HepG2 (cell line): ENCODE measurements at regions of chr16 and their contacts with region 1.

Region 1: DNA sequence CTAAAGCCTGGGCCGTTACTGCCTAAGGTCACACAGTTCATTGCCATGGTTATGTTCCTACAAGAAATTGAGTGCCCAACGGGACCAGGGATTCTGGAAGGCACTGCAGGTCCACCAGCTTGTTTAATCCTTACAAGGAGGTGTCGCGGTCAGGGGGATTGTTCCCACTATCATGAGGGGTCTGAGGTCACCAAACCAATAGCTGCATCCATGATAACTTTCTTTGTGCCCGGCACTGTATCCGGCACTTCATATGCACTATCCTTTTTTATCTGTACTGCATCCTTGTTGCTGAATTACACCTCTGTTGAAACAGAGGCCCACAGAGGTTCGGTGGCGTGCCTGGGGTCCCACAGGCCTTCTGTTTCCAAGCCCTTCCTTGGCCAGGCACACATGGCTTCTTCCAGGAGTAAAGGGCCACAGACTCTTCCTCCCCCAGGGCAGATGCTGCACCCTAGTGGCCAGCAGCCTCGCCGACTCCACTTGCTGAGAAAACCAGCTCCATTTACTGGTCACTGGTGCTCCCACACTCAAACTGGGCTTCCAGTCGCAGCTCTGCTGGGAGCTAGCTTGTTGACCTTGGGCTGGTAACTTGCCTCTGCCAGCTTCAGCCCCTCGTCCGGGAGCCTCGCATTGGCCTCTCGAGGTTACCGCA is 82.0 kb upstream of the PLCG2 start:
- DNase-seq: peak; percentile 45
- ATAC-seq: peak; percentile 68
- H3K4me3 ChIP-seq: no peak overlapping the region
- H3K27ac ChIP-seq: no peak overlapping the region
- H3K4me1 ChIP-seq: no peaks in the 10 kb centered on the region
- H3K27me3 ChIP-seq: no peaks in the 10 kb centered on the region
- CTCF ChIP-seq: peak; percentile 90
- EP300 ChIP-seq: no peak
- POLR2A ChIP-seq: no peak
- RAD21 ChIP-seq: peak; percentile 72

Region 2: DNA sequence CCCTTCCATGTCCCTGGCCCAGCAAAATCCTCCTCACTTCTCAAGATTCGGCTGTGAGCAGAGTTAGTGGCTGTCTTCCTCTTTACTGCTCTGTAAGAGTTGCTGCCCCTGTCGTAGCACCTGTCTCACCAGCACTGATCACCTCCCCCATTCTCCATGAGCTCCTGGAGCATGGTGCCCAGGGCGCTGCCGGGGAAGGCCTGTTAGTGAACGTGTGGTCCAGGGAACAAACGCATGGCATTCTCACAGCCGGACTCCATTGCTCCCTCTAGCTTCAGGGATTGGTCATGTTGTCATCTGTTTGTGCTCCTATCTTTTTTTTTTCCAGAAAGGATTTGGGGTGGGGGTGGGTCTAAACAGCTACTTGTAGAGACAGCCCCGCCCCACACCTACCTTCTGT is 111.3 kb before region 1 on chr16:
- CTCF ChIA-PET with region 1: no interaction called
- POLR2A ChIA-PET with region 1: no interaction called
- in situ Hi-C with region 1: no loop called
- intact Hi-C with region 1: no loop called
- DNase-seq: peak; percentile 50
- ATAC-seq: no peak; the same call in 2 of the 3 replicates
- H3K4me3 ChIP-seq: no peak overlapping the region
- H3K27ac ChIP-seq: no peak overlapping the region
- H3K4me1 ChIP-seq: peaks cover 56% of the 10 kb centered on the region
- H3K27me3 ChIP-seq: no peaks in the 10 kb centered on the region
- CTCF ChIP-seq: peak; percentile 48
- EP300 ChIP-seq: no peak
- POLR2A ChIP-seq: no peak
- RAD21 ChIP-seq: peak; percentile 40; the same call in 1 of the 2 replicates

Region 3: DNA sequence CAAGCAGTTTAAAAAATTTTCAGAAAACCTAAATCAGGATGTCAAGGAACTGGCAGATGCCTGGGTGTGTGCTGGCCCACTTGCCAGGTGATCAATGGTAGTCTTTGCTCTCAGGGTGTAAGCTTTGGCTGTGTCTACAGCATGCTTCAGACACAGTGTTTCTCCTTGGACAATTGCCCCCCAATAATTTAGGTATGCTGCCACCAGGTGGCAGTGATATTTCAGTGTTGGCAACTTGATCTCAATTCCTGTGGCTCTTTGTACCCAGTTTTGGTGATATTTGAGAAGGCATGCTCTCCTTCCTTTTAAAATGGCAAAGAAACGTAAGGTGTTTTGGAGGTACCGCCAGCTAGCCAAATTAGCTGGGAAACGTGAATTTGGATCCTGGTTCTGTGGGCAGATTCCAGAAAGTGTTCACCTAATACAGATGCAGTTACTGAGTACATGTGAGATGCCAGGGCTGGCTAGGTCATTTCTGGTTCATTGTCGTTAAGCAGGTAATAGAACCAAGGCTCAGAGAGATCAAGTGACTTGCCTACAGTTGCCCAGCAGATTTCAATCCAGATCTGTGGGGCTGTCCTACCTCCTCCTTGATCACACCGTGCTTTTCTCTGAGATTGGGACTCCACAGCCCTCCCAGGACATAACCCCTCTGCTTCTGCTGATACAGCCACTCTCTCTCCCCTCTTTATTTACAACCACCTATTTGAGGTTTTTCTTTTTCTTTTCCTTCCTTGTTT is 73.6 kb before region 1 on chr16:
- CTCF ChIA-PET with region 1: no interaction called
- POLR2A ChIA-PET with region 1: no interaction called
- in situ Hi-C with region 1: no loop called
- intact Hi-C with region 1: loop called (anchors 1 kb)
- DNase-seq: peak; percentile 50
- ATAC-seq: peak; percentile 14; the same call in 2 of the 3 replicates
- H3K4me3 ChIP-seq: no peak overlapping the region
- H3K27ac ChIP-seq: peak overlapping the region; percentile 82
- H3K4me1 ChIP-seq: peaks cover 37% of the 10 kb centered on the region
- H3K27me3 ChIP-seq: no peaks in the 10 kb centered on the region
- CTCF ChIP-seq: peak; percentile 83
- EP300 ChIP-seq: no peak
- POLR2A ChIP-seq: no peak
- RAD21 ChIP-seq: peak; percentile 21; the same call in 1 of the 2 replicates